Activated CD4-positive, alpha-beta T cell treated with anti-CD3 and anti-CD28 coated beads, Interleukin-2, amount 10 ng/mL, durations not matched to agents 24 days and 14 days (primary cell): ENCODE measurements at regions of chr1 and their contacts with region 1.

Region 1: DNA sequence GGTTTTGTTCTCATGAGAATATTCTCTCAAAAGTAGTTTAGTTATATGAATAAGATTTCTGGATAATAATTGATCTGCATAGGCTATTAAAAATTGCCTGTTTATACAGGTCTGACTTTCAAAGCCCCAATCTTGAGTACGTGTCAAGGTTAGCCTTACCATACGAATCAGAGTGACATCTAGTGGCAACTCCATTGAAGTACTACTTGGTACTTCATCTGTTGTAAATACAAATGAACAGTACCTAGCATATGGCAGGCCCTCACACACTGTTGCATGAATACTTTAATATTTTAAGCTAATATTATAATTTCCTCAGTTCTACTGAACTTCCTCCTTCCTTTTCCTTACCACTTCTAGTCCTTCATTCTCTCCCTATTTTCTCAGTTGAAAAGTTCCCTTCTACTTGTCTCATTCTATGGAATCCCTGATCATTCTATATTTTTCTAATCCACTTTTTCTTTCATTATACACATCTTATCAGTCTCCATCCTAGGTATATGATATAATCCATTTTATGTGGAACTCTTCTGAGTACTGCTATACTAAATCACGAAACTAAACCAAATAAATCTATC is 101.2 kb downstream of the AKT3 start:
- DNase-seq: peak; percentile 79
- H3K4me3 Mint-ChIP-seq: no peak overlapping the region
- H3K27ac Mint-ChIP-seq: no peak overlapping the region
- H3K4me1 Mint-ChIP-seq: peaks cover 2% of the 10 kb centered on the region
- H3K27me3 Mint-ChIP-seq: no peaks in the 10 kb centered on the region

Region 2: GRCh38 chr1:243471754-243472745 is 276.7 kb before region 1 on chr1:
- intact Hi-C with region 1: loop called (anchors 10 kb)
- DNase-seq: no peak
- H3K4me3 Mint-ChIP-seq: no peak overlapping the region
- H3K27ac Mint-ChIP-seq: no peak overlapping the region
- H3K4me1 Mint-ChIP-seq: peaks cover 7% of the 10 kb centered on the region
- H3K27me3 Mint-ChIP-seq: no peaks in the 10 kb centered on the region

Region 3: GRCh38 chr1:243587823-243588560 is 160.8 kb before region 1 on chr1:
- intact Hi-C with region 1: loop called (anchors 10 kb)
- DNase-seq: no peak
- H3K4me3 Mint-ChIP-seq: peak overlapping the region; percentile 6
- H3K27ac Mint-ChIP-seq: peak overlapping the region; percentile 57
- H3K4me1 Mint-ChIP-seq: peaks cover 13% of the 10 kb centered on the region
- H3K27me3 Mint-ChIP-seq: no peaks in the 10 kb centered on the region

Region 4: GRCh38 chr1:243791586-243792267 is 42.9 kb after region 1 on chr1:
- intact Hi-C with region 1: no loop called
- DNase-seq: no peak
- H3K4me3 Mint-ChIP-seq: no peak overlapping the region
- H3K27ac Mint-ChIP-seq: no peak overlapping the region
- H3K4me1 Mint-ChIP-seq: peaks cover 10% of the 10 kb centered on the region
- H3K27me3 Mint-ChIP-seq: no peaks in the 10 kb centered on the region

Region 5: DNA sequence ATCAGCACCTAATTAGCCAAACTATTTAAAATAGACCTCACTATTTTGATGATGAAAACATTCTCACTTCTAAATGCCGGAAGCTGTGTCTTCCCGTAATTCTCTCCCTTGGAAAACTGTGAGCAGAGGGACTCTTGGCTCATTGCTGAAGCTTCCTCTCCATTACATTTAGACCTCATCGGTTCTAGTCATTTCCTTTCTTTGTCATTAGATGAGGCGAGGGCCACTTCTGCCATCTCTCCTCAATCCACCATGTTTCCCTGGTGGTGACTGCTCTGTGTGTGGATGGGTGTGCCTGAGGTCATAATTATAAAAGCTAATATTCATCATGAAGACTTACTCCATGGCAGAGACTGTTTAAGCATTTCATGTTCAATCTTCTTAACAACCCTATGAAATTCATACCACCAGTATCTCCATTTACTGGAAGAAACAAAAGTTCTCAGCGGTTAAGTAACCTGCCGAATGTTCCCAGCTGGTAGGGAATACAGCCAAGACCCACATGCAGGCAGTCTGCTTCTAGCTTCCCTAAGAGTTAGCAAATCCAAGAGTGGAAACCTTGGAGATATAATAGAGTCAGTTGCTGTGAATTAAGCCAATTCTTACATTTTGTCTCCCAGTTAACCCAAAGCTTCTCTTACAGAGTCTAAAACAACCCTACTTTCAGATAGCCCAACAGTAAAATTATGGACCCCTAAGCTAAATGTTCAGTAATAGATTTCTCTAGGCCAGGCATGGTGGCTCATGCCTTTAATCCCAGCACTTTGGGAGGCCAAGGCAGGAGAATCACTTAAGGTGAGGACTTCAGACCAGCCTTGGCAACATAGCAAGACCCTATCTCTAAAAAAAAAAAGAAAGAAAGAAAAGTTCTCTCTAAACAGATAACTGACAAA is 458.5 kb after region 1 on chr1:
- intact Hi-C with region 1: no loop called
- DNase-seq: no peak
- H3K4me3 Mint-ChIP-seq: no peak overlapping the region
- H3K27ac Mint-ChIP-seq: no peak overlapping the region
- H3K4me1 Mint-ChIP-seq: no peaks in the 10 kb centered on the region
- H3K27me3 Mint-ChIP-seq: no peaks in the 10 kb centered on the region

Region 6: GRCh38 chr1:244272471-244273261 is 523.9 kb after region 1 on chr1:
- intact Hi-C with region 1: loop called (anchors 10 kb)
- DNase-seq: peak; percentile 91
- H3K4me3 Mint-ChIP-seq: no peak overlapping the region
- H3K27ac Mint-ChIP-seq: no peak overlapping the region
- H3K4me1 Mint-ChIP-seq: peaks cover 9% of the 10 kb centered on the region
- H3K27me3 Mint-ChIP-seq: peaks cover 1% of the 10 kb centered on the region